GM13977 (cell line): ENCODE measurements at regions of chr13 and their contacts with region 1.

Region 1: GRCh38 chr13:26971990-26972887 is 199.4 kb downstream of the USP12 start:
- DNase-seq: peak; percentile 34
- CTCF ChIP-seq: peak; percentile 62

Region 2: GRCh38 chr13:26619358-26619757 is 352.9 kb before region 1 on chr13:
- in situ Hi-C with region 1: no loop called
- DNase-seq: no peak
- CTCF ChIP-seq: no peak

Region 3: GRCh38 chr13:26772531-26772930 is 199.7 kb before region 1 on chr13:
- in situ Hi-C with region 1: no loop called
- DNase-seq: no peak
- CTCF ChIP-seq: no peak

Region 4: DNA sequence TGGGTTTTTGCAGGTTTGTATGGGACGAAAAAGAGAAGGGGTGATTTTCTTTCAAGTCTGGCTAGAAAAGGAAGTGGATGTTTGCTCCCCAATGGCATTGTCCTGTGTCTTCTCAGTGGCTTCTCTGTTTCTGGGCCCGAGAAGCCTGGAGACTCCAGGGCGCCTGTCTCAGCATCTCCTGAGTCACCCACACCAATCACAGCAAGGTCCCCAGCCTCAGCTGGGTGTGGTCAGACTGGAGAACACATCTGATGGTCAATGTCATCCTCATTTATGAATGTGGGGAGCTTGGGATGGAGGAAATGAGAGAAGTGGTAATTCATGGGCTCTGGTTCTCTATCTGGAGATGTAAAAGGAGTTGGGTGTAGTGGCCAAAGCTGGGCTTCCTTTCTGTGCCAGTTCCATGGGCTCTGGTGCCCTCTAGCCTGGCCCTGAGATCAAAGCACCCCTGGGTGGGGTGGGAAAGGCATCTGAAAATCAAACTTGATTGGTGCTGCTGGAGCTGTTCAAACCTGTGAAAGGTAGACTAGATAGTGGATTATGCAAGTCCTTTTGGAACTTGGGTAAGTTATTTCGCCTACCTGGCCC is 311.8 kb after region 1 on chr13:
- in situ Hi-C with region 1: loop called (anchors 10 kb)
- DNase-seq: no peak
- CTCF ChIP-seq: peak; percentile 52